CD4-positive, alpha-beta T cell (primary cell): ENCODE measurements at regions of chr7 and their contacts with region 1.

Region 1: DNA sequence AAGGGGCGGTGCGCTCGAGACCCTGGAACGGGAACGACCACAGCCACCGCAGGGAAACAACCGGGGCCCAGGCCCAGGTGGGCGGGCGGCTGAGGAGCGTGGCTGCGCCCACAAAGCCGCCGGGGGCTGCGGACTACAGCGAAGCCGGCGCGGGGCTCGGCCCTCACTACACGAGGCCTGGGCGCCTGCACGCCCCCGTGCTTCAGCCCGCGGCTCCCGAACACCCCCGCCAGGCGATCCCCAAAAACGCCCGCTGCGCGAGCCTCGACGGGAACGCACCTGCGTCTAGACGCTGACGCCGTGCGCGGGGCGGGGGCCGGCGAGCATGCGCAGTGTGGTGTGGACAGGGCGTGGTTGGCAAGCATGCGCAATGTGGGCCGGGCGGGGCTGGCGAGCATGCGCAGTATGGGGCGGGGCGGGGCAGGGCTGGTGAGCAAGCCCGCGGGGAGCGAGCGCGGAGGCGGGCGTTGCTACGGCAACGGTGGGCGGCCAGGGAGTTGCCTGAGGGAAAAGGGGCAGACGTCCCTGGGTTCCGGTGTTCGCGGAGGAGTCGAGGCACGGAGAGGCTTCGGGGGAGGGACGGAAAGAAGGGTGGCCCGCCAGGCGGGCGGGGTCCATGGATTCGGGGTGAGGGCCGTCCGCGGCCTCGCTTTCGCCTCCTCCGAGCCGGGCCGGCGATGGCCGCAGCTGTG is at the start of gene RNF32:
- DNase-seq: peak; percentile 87 to 98 (median 92)
- ATAC-seq: peak; percentile 74
- H3K4me3 ChIP-seq: peak within 1 kb of the TSS; percentile 64
- H3K4me3 Mint-ChIP-seq: peak within 1 kb of the TSS; percentile 89
- H3K27ac ChIP-seq: peak within 1 kb of the TSS; percentile 53 to 78
- H3K27ac Mint-ChIP-seq: peak within 1 kb of the TSS; percentile 85
- H3K4me1 ChIP-seq: peaks cover 17% of the 10 kb centered on the region
- H3K4me1 Mint-ChIP-seq: peaks cover 18% of the 10 kb centered on the region
- H3K27me3 ChIP-seq: no peaks in the 10 kb centered on the region
- H3K27me3 Mint-ChIP-seq: peaks cover 69% of the 10 kb centered on the region
- CTCF ChIP-seq: no peak
- total RNA-seq, gene RNF32: 0.99 TPM in 1 of 2 experiments, not detected in the other

Region 2: DNA sequence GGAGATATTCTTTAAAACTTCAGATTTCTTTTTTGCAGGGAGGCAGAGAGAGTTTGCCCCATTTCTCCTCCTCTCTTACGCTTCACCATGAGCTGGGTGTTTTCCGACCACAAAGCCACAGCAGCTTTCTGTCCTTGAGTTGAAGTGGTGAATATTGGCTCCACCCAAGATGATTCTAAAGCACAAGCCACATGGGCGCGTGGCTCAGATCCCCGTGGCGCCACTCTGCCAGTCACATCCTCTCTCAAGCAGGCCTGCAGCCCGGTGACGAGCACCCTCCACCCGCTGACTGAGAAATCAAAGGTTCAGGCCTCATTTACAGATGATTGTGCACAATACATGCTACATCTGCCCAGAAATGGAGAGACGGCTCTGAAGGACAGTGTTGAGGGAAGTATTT is 27.5 kb before region 1 on chr7:
- CTCF ChIA-PET with region 1: no interaction called
- POLR2A ChIA-PET with region 1: interaction called, 7 read pairs
- intact Hi-C with region 1: loop called in 1 of 2 experiments (anchors 2 kb)
- DNase-seq: peak; percentile 46 to 90 (median 66)
- ATAC-seq: peak; percentile 96
- H3K4me3 ChIP-seq: no peak overlapping the region
- H3K4me3 Mint-ChIP-seq: peak overlapping the region; percentile 15
- H3K27ac ChIP-seq: peak overlapping the region in 1 of 2 donors; percentile 41
- H3K27ac Mint-ChIP-seq: peak overlapping the region; percentile 38
- H3K4me1 ChIP-seq: peaks cover 29% of the 10 kb centered on the region
- H3K4me1 Mint-ChIP-seq: peaks cover 49% of the 10 kb centered on the region
- H3K27me3 ChIP-seq: peaks cover 19 to 30% of the 10 kb centered on the region in 2 experiments
- H3K27me3 Mint-ChIP-seq: peaks cover 62% of the 10 kb centered on the region
- CTCF ChIP-seq: no peak

Region 3: DNA sequence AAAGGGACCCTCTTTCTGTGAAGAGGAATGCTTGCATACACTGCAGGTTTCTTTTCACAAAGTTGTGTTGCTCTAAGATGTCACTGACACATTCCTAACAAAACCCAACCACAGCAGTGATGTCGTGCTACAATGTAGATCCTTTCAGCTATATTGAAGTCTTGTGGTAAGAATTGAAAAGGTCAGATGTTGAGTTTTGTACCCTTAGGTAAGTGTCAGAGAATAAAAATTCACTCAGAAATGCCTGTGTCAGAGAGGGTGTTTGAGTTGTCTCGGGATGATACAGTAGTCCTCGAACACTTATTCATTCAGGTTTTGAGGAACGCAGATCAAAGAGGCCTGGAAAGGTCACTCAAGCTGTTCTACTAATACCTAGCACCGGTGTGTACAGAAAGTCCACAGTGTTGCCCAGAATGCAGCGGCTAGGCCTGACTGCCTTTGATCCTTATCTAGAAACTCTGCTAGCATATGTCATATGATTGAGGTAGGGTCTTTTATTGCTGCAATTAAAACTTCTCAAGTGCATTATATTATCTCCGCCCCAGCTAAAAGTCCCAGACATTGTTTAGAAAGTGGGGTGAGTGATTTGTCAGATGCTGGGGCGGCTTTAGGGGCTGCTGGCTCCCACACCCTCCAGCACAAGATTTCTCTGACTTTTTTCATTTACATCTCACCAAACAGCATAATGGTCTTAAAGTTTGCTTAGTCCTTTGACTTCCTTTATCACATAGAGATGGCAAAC is 26.1 kb after region 1 on chr7:
- CTCF ChIA-PET with region 1: no interaction called
- POLR2A ChIA-PET with region 1: no interaction called
- intact Hi-C with region 1: loop called in 1 of 2 experiments (anchors 2 kb)
- DNase-seq: no peak
- ATAC-seq: no peak
- H3K4me3 ChIP-seq: no peak overlapping the region
- H3K4me3 Mint-ChIP-seq: no peak overlapping the region
- H3K27ac ChIP-seq: no peak overlapping the region
- H3K27ac Mint-ChIP-seq: no peak overlapping the region
- H3K4me1 ChIP-seq: no peaks in the 10 kb centered on the region
- H3K4me1 Mint-ChIP-seq: no peaks in the 10 kb centered on the region
- H3K27me3 ChIP-seq: no peaks in the 10 kb centered on the region
- H3K27me3 Mint-ChIP-seq: no peaks in the 10 kb centered on the region
- CTCF ChIP-seq: no peak